HepG2 (cell line): ENCODE measurements at regions of chr1 and their contacts with region 1.

Region 1: GRCh38 chr1:15028102-15028501 is 125.4 kb upstream of the TMEM51 start:
- DNase-seq: no peak
- ATAC-seq: no peak
- H3K4me3 ChIP-seq: no peak overlapping the region
- H3K27ac ChIP-seq: no peak overlapping the region
- H3K4me1 ChIP-seq: peaks cover 51% of the 10 kb centered on the region
- H3K27me3 ChIP-seq: no peaks in the 10 kb centered on the region
- CTCF ChIP-seq: no peak
- EP300 ChIP-seq: no peak
- POLR2A ChIP-seq: no peak
- RAD21 ChIP-seq: no peak

Region 2: DNA sequence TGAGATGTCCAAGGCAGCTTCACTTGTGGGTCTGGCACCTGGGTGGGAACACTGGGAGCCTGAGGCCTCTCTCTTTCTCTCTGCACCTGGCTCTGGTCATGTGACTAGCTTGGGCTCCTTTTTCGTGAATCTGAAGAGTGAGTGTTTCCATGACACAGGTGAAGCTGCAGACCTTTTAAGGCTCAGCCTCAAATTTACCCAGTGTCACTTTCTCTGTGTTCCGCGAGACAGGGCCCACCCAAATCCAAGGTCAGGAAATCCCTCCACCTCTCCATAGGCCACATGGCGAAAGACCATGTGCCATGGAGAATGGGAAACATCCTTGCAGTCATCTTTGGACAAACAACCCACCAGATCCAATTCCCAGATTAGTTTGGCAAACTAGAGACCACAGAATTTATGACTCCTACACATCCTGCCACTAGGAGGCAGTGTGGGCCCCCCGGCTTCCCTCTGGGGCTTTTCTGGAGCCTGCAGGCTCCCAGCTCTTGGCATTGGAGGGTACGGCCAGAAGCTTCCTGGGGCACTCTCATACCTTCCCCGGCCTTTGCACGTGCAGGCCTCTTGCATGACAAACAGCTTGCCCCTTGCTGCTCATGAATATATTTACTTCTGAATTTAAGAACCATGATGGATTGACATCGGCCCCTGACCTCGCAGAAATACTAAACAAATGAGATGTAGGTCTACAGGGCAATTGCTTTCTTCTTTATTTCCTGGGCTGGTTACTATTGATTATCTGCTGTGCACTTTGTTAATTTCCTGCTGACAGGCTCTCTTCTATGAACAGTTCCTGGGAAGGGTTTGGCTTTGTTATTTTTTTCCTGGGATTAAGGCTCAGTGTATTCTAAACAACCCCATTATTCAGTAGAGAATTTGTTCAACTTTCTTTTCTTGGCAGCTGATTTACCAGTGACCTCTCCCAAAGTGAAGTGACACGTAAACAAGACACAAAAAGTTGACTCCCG is 248.9 kb before region 1 on chr1:
- CTCF ChIA-PET with region 1: interaction called, 3 read pairs
- POLR2A ChIA-PET with region 1: no interaction called
- in situ Hi-C with region 1: no loop called
- intact Hi-C with region 1: loop called (anchors 1 kb)
- DNase-seq: peak; percentile 36
- ATAC-seq: peak; percentile 66
- H3K4me3 ChIP-seq: no peak overlapping the region
- H3K27ac ChIP-seq: no peak overlapping the region
- H3K4me1 ChIP-seq: no peaks in the 10 kb centered on the region
- H3K27me3 ChIP-seq: peaks cover 1 to 22% of the 10 kb centered on the region in 2 experiments; a peak in 2 of 5 replicates
- CTCF ChIP-seq: peak; percentile 67
- EP300 ChIP-seq: no peak
- POLR2A ChIP-seq: no peak
- RAD21 ChIP-seq: peak; percentile 41; the same call in 1 of the 2 replicates

Region 3: GRCh38 chr1:14923727-14924452 is 104.2 kb before region 1 on chr1:
- CTCF ChIA-PET with region 1: interaction called, 4 read pairs
- POLR2A ChIA-PET with region 1: no interaction called
- in situ Hi-C with region 1: loop called (anchors 25 kb)
- intact Hi-C with region 1: loop called (anchors 2 kb)
- DNase-seq: no peak
- ATAC-seq: peak; percentile 49
- H3K4me3 ChIP-seq: peak overlapping the region; percentile 65 to 90 (median 87); a peak in 5 of 6 replicates
- H3K27ac ChIP-seq: no peak overlapping the region
- H3K4me1 ChIP-seq: peaks cover 74% of the 10 kb centered on the region
- H3K27me3 ChIP-seq: no peaks in the 10 kb centered on the region; a peak in 1 of 5 replicates
- CTCF ChIP-seq: no peak
- EP300 ChIP-seq: no peak
- POLR2A ChIP-seq: peak in 1 of 2 experiments; percentile 50; a peak in 2 of 4 replicates
- RAD21 ChIP-seq: no peak